ENCODE measurements at regions of chr7 and their contacts with region 1.

Region 1: GRCh38 chr7:98996150-98996552 is 117.8 kb downstream of the TRRAP start:
- DNase-seq: no peak
- ATAC-seq: no peak
- H3K4me3 Mint-ChIP-seq: no peak overlapping the region
- H3K27ac Mint-ChIP-seq: no peak overlapping the region
- H3K4me1 Mint-ChIP-seq: peaks cover 5% of the 10 kb centered on the region
- H3K27me3 Mint-ChIP-seq: no peaks in the 10 kb centered on the region
- CTCF ChIP-seq: no peak

Region 2: DNA sequence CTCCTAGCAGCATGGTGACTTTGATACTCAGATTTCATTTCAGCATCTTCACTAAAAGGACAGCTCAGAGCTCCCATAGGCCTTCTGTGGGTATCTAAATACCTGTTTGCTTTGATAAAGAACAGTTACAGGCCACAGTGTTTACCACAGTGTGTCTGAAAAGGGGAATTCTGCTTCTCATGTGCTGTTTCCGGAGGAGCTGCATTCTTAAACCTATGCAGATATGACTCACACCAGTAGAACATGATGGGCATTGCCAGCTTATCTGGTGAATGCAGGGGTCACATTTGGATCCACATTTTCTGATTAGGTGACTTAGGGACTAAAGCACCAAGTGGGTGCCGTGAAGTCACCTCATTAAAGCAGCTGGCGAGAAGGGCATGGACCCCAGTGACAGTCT is 65.2 kb before region 1 on chr7:
- CTCF ChIA-PET with region 1: no interaction called
- POLR2A ChIA-PET with region 1: no interaction called
- intact Hi-C with region 1: loop called (anchors 5 kb)
- DNase-seq: no peak
- ATAC-seq: peak; percentile 86
- H3K4me3 Mint-ChIP-seq: peak overlapping the region; percentile 56
- H3K27ac Mint-ChIP-seq: peak overlapping the region; percentile 75
- H3K4me1 Mint-ChIP-seq: peaks cover 15% of the 10 kb centered on the region
- H3K27me3 Mint-ChIP-seq: no peaks in the 10 kb centered on the region
- CTCF ChIP-seq: no peak